Activated B cell treated with CpG ODN at 0.5 μM for 24 hours (primary cell): ENCODE measurements at regions of chr19 and their contacts with region 1.

Region 1: DNA sequence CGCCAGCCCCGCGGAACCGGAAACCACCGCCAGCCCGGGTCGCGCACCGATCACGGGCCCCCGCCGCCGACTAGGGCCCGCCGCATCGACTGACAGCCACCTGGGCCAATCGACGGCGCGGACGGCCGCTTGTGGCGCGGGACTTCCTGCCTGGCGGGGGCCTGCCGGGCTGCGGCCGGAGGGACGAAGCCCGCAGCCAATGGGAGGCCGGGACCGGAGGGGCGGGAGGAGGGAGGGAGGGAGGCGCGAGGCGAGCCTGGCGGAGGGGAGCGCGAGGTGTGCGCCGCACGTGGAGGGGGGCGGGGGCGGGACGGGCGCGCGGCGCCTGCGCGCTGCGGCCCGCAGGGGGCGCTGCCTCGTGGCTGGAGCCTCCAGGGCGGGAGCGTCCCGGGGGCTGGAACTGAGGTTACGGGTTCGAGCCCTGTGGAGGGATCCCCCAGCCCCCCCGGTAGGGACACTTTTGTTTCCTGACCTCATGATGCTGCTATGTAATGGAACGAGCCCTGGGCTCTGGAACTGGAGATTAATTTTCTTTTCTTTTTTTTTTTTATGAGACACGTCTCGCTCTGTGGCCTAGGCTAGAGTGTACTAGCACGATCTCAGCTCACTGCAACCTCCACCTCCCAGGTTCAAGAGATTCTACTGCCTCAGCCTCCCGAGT is at the start of gene MLLT1:
- DNase-seq: peak; percentile 95
- ATAC-seq: peak; percentile 95
- H3K4me3 Mint-ChIP-seq: peak within 1 kb of the TSS; percentile 88
- H3K27ac Mint-ChIP-seq: peak within 1 kb of the TSS; percentile 68
- H3K4me1 Mint-ChIP-seq: peaks cover 35% of the 10 kb centered on the region
- H3K27me3 Mint-ChIP-seq: no peaks in the 10 kb centered on the region
- CTCF ChIP-seq: peak; percentile 36
- total RNA-seq, gene MLLT1: 39.0 and 41.3 TPM in 2 replicates

Region 2: GRCh38 chr19:6218491-6219162 is 61.4 kb before region 1 on chr19:
- CTCF ChIA-PET with region 1: interaction called, 3 read pairs
- POLR2A ChIA-PET with region 1: no interaction called
- intact Hi-C with region 1: loop called (anchors 1 kb)
- DNase-seq: peak; percentile 79
- ATAC-seq: peak; percentile 90
- H3K4me3 Mint-ChIP-seq: no peak overlapping the region
- H3K27ac Mint-ChIP-seq: no peak overlapping the region
- H3K4me1 Mint-ChIP-seq: no peaks in the 10 kb centered on the region
- H3K27me3 Mint-ChIP-seq: no peaks in the 10 kb centered on the region
- CTCF ChIP-seq: no peak

Region 3: GRCh38 chr19:6228541-6229215 is 51.4 kb before region 1 on chr19:
- CTCF ChIA-PET with region 1: no interaction called
- POLR2A ChIA-PET with region 1: no interaction called
- intact Hi-C with region 1: no loop called
- DNase-seq: no peak
- ATAC-seq: no peak
- H3K4me3 Mint-ChIP-seq: no peak overlapping the region
- H3K27ac Mint-ChIP-seq: no peak overlapping the region
- H3K4me1 Mint-ChIP-seq: peaks cover 8% of the 10 kb centered on the region
- H3K27me3 Mint-ChIP-seq: no peaks in the 10 kb centered on the region
- CTCF ChIP-seq: no peak

Region 4: GRCh38 chr19:6259312-6259861 is 20.7 kb before region 1 on chr19:
- CTCF ChIA-PET with region 1: no interaction called
- POLR2A ChIA-PET with region 1: no interaction called
- intact Hi-C with region 1: loop called (anchors 2 kb)
- DNase-seq: no peak
- ATAC-seq: no peak
- H3K4me3 Mint-ChIP-seq: no peak overlapping the region
- H3K27ac Mint-ChIP-seq: no peak overlapping the region
- H3K4me1 Mint-ChIP-seq: peaks cover 20% of the 10 kb centered on the region
- H3K27me3 Mint-ChIP-seq: no peaks in the 10 kb centered on the region
- CTCF ChIP-seq: no peak

Region 5: DNA sequence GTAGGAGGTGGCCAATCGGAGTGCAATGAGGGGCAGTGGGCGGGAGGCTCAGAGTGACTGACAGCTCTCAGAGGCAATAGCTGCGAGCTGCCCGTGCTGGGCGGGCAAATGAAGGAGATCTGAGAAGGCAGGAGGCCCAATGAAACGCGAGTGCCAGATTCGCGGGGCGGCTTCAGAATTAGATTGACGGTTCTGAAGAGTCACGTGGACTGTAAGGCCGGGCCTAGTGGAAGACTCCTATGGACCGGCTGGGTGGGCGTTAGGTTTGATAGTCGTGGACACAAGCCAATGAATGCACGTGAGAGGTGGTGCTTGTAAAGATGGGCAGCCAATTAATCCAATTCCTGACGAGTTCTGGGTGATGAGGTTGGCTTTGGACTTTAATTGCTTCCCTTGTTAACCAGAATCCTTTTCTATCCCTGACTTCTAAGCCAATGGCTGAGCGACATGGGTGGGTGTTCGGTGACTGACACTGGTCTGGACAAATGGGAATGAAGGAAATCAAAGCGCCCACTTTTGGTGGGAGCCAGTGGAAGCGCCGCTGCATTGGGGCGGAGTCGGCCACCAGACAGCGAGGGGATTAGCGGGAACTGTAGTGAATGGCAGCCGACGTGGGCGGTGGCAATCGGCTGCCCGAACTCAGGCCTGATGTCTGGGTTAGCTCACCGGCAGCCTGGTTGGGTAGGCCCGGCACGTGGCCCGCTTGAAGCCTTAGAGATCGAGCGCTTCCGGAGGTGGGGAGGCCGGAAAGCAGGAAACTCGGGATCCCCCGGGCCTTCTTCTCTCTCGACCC is 145.1 kb after region 1 on chr19:
- CTCF ChIA-PET with region 1: no interaction called
- POLR2A ChIA-PET with region 1: no interaction called
- intact Hi-C with region 1: loop called (anchors 1 kb)
- DNase-seq: peak; percentile 92
- ATAC-seq: peak; percentile 83
- H3K4me3 Mint-ChIP-seq: peak overlapping the region; percentile 78
- H3K27ac Mint-ChIP-seq: peak overlapping the region; percentile 85
- H3K4me1 Mint-ChIP-seq: peaks cover 30% of the 10 kb centered on the region
- H3K27me3 Mint-ChIP-seq: no peaks in the 10 kb centered on the region
- CTCF ChIP-seq: no peak

Region 6: GRCh38 chr19:6632002-6632621 is 352.1 kb after region 1 on chr19:
- CTCF ChIA-PET with region 1: no interaction called
- POLR2A ChIA-PET with region 1: no interaction called
- intact Hi-C with region 1: loop called (anchors 2 kb)
- DNase-seq: peak; percentile 25
- ATAC-seq: peak; percentile 81
- H3K4me3 Mint-ChIP-seq: no peak overlapping the region
- H3K27ac Mint-ChIP-seq: peak overlapping the region; percentile 26
- H3K4me1 Mint-ChIP-seq: peaks cover 29% of the 10 kb centered on the region
- H3K27me3 Mint-ChIP-seq: peaks cover 2% of the 10 kb centered on the region
- CTCF ChIP-seq: peak; percentile 65